Heart right ventricle (tissue), 16 donors: ENCODE measurements at regions of chr9 and their contacts with region 1.

Region 1: DNA sequence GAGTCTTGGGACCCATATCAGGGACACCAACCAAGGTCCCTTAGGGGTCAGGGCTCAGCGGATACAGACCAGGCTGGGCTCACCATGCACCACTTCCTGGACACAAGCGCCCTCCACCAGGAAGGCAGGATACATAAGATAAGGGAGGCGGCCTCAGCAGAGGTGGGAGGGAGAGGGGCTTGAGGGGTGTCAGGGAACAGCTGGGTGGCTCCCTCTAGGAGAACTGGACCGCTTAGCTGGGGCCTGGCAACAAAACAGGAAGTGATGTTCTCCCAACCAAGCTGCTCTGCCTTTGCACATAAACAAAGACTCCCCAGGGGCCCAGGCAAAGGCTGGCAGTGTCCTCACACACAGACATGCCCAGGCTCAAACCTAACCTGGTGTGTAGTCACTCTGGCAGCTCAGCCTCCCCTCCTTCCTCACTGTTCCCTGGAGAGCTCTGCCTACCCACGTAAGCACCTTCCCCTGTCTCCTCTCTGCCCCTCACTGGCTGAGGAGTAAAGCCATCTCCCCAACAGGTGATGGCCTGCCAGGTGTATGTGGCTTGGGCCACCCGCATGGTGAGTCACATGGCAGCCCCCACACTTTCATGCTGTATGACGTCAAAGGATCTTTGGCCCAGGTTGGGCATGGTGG is 5.8 kb upstream of the BICD2 start:
- DNase-seq: no peak
- ATAC-seq: peak in 6 of 8 donors; percentile 2 to 28 (median 20)
- H3K4me3 ChIP-seq: no peak overlapping the region
- H3K27ac ChIP-seq: peak overlapping the region in 8 of 10 donors; percentile 35 to 79 (median 68)
- H3K4me1 ChIP-seq: peaks cover 0 to 48% (median 23%) of the 10 kb centered on the region in 9 donors
- H3K27me3 ChIP-seq: no peaks in the 10 kb centered on the region
- CTCF ChIP-seq: no peak

Region 2: DNA sequence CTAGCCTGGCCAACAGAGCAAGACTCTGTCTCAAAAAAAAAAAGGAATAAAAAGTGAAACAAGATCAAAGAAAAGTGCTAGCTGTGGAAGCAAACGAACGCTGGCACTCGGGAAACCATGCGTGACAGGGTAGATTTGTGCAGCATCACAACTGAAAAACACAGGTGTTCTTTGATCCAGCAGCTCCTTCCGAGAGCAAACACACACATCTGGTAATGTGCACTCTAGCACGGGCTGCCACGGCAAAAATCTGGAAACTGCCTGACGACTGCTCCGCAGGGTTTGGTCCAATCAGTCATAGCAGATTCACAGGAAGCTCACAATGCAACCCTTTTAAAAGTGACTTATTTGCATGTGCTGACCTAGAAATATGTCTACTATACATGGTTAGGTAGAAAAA is 1888.8 kb before region 1 on chr9:
- intact Hi-C with region 1: no loop called
- DNase-seq: no peak
- ATAC-seq: no peak
- H3K4me3 ChIP-seq: no peak overlapping the region
- H3K27ac ChIP-seq: no peak overlapping the region
- H3K4me1 ChIP-seq: no peaks in the 10 kb centered on the region
- H3K27me3 ChIP-seq: peaks cover 0 to 3% (median 0%) of the 10 kb centered on the region in 7 donors
- CTCF ChIP-seq: no peak

Region 3: DNA sequence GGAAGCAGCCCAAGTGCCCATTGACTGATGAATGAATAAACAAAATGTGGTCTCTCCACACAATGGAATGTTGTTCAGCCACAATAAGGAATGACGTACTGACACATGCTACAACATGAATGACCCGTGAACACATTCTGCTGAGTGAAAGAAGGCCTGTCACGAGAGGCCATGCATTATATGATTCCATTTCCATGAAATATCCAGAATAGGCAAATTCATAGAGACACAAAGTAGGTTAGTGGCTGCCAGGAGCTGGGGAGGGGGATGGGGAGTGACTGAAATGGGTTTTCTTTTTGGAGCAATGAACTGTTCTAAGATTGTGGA is 47.2 kb before region 1 on chr9:
- intact Hi-C with region 1: loop called in 3 of 10 experiments (anchors 5 kb)
- DNase-seq: peak in 1 of 2 donors; percentile 1
- ATAC-seq: no peak
- H3K4me3 ChIP-seq: no peak overlapping the region
- H3K27ac ChIP-seq: no peak overlapping the region
- H3K4me1 ChIP-seq: peaks cover 7 to 27% (median 14%) of the 10 kb centered on the region in 9 donors
- H3K27me3 ChIP-seq: no peaks in the 10 kb centered on the region
- CTCF ChIP-seq: no peak

Region 4: GRCh38 chr9:92728831-92729734 is 41.4 kb before region 1 on chr9:
- intact Hi-C with region 1: loop called in 3 of 10 experiments (anchors 5 kb)
- DNase-seq: no peak
- ATAC-seq: peak in 6 of 8 donors; percentile 41 to 61 (median 54)
- H3K4me3 ChIP-seq: no peak overlapping the region
- H3K27ac ChIP-seq: no peak overlapping the region
- H3K4me1 ChIP-seq: peaks cover 7 to 61% (median 36%) of the 10 kb centered on the region in 9 donors
- H3K27me3 ChIP-seq: no peaks in the 10 kb centered on the region
- CTCF ChIP-seq: peak in 7 of 9 donors; percentile 41 to 71 (median 53)